ENCODE measurements at regions of chr10 and their contacts with region 1.

Region 1: GRCh38 chr10:56286096-56286495 is 75.0 kb downstream of the ZWINT start:
- DNase-seq: no peak
- H3K4me3 ChIP-seq: no peak overlapping the region
- H3K27ac ChIP-seq: no peak overlapping the region
- H3K4me1 ChIP-seq: no peaks in the 10 kb centered on the region
- H3K27me3 ChIP-seq: no peaks in the 10 kb centered on the region
- CTCF ChIP-seq: no peak

Region 2: DNA sequence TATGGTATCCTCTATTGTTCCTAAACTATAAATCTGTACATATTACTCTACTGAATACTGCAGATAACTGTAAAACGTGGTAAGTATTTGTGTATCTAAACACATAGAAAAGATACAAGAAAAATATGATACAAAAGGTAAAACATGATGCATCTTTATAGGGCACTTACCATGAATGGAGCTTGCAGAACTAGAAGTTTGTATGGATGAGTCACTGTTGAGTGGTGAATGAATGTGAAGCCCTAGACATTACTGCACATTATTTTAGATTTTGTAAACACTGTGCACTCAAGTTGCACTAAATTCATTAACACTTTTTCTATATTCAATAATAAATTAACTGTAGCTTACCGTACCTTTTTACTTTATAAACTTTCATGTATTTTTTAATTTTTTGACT is 282.5 kb before region 1 on chr10:
- CTCF ChIA-PET with region 1: no interaction called
- dilution Hi-C with region 1: no loop called
- in situ Hi-C with region 1: no loop called
- intact Hi-C with region 1: no loop called
- DNase-seq: no peak
- H3K4me3 ChIP-seq: no peak overlapping the region
- H3K27ac ChIP-seq: no peak overlapping the region
- H3K4me1 ChIP-seq: no peaks in the 10 kb centered on the region
- H3K27me3 ChIP-seq: no peaks in the 10 kb centered on the region
- CTCF ChIP-seq: no peak

Region 3: GRCh38 chr10:56240471-56240870 is 45.6 kb before region 1 on chr10:
- CTCF ChIA-PET with region 1: interaction called, 11 read pairs
- dilution Hi-C with region 1: no loop called
- in situ Hi-C with region 1: no loop called
- intact Hi-C with region 1: no loop called
- DNase-seq: no peak
- H3K4me3 ChIP-seq: no peak overlapping the region
- H3K27ac ChIP-seq: no peak overlapping the region
- H3K4me1 ChIP-seq: no peaks in the 10 kb centered on the region
- H3K27me3 ChIP-seq: no peaks in the 10 kb centered on the region
- CTCF ChIP-seq: no peak

Measured in mammary epithelial cell (primary cell).